ENCODE measurements at regions of chr22 and their contacts with region 1.

Region 1: DNA sequence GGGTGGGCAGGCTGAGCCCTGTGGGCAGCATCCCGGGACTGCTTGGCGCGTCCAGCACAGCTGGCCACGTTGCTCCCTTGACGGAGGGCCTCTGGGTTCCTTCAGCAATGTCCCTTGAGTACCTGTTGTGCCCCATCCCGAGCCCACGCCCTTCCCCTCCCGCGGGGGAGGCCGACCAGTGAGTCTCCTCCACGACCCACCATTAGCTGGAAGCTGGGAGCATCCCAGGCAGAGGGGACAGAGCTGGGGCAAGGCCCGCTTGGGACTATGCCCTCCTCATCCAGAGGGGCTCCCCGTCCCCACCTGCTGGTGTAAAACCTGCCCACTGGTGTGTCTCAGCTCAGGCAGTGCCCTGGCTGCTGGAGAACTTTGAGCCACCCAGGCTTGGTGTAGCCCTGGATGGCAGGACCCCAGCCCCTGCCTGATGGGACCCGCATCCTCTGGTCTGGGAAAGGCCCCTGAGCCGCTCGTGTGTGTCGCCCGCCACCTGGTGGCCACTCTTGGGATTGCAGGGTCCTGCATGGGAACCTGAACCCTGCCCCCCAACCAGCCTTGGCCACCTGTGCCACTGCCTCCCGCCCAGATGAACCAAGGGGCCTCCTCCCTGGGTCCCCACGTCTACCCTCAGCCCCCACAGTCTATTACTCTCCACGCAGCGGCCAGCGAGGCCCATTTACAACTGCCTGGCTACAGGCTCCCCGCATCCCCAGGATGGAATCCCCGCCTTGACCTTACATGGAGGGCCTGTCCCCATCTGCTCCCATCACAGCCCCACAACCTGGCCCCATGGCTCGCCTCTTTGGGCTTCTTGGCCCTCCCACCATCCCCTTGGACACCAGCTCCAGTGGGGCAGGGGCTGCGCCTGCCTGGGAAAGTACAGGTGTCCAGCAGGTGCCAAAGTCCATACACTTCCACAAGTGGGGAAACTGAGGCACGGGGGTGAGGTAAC is 16.6 kb upstream of the ARHGAP8 start:
- DNase-seq: peak in 1 of 2 donors; percentile 65
- H3K4me3 ChIP-seq: no peak overlapping the region
- H3K27ac ChIP-seq: no peak overlapping the region
- H3K4me1 ChIP-seq: peaks cover 0 to 2% (median 0%) of the 10 kb centered on the region in 4 donors
- H3K27me3 ChIP-seq: peaks cover 0 to 40% of the 10 kb centered on the region in 2 donors
- CTCF ChIP-seq: peak; percentile 93 to 96

Region 2: DNA sequence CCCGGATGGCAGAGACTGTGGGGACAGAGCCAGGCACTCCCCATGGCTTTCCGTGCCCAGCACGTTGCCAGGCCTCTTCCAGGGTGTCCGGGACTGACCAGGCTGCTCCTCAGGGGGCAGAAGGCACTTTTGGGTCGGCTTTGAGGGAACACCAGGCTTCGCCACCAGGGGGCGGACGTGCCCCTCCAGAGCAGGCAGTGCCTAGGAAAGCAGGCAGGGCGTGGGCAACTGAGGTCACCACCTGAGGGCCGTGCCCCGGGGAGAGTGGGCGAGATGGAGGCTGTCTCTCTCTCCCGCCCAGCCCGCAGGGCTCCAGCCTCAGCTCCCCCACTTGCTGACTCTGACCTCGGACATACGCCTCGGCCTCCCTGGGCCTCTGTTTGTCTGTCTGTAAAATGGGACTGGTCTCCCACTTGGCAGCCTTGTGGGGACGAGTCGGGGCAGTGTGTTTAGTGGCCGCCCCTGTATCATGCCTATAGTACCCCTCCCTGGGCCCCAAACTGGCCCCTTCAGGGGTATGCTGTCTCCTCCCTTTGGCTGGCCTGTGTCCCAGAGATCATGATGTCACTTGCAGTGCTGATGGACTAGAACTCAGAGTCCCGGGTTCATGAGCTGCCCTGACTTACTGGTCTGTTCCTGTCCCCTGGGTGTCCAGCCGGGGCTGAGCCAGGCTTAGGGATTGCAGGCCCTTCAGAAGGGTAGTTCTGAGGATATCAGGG is 38.2 kb before region 1 on chr22:
- intact Hi-C with region 1: loop called (anchors 5 kb)
- DNase-seq: peak; percentile 69 to 74
- H3K4me3 ChIP-seq: no peak overlapping the region
- H3K27ac ChIP-seq: peak overlapping the region in 1 of 2 donors; percentile 69
- H3K4me1 ChIP-seq: peaks cover 0 to 23% (median 13%) of the 10 kb centered on the region in 4 donors
- H3K27me3 ChIP-seq: peaks cover 0 to 27% of the 10 kb centered on the region in 2 donors
- CTCF ChIP-seq: peak; percentile 80 to 83